Naive thymus-derived CD4-positive, alpha-beta T cell (primary cell): ENCODE measurements at regions of chr13 and their contacts with region 1.

Region 1: GRCh38 chr13:52128714-52129700 is at the start of gene NEK5:
- DNase-seq: peak; percentile 36 to 75 (median 55)
- ATAC-seq: peak; percentile 82
- H3K4me3 ChIP-seq: peak within 1 kb of the TSS; percentile 51
- H3K4me3 Mint-ChIP-seq: peak within 1 kb of the TSS; percentile 85 to 94 (median 88)
- H3K27ac ChIP-seq: no peak within 1 kb of the TSS
- H3K27ac Mint-ChIP-seq: peak within 1 kb of the TSS in 4 of 9 donors; percentile 3 to 19 (median 6)
- H3K4me1 ChIP-seq: peaks cover 11 to 13% of the 10 kb centered on the region in 2 donors
- H3K4me1 Mint-ChIP-seq: peaks cover 11 to 21% (median 18%) of the 10 kb centered on the region in 7 donors
- H3K27me3 ChIP-seq: no peaks in the 10 kb centered on the region
- H3K27me3 Mint-ChIP-seq: peaks cover 0 to 14% (median 6%) of the 10 kb centered on the region in 5 donors
- total RNA-seq, gene NEK5: not detected

Region 2: DNA sequence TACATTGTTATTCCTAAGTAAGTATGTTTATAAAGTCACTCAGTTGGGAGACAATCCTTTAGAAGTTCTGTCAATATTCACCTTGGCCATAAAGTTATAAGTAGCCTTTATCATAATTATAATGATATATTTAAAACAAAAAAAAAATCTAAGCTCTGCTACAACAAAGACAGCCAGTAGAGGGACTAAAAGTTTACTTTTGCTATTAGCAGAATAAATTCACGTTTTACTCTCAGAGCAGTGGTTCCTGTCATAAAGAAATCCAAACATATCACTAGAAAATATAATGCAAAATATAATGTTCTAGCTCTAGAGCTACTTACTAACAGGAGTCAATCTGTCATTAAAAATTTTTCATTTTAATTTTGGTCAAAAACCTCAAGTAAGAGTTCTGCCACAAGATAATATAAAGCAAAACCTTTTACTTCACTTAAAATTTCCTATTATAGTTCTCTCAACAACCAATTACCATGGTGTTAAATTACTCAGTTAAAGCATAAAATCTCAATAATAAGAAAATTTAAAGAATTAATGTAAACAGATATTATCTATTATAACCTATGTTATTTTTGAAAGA is 693.9 kb before region 1 on chr13:
- CTCF ChIA-PET with region 1: interaction called, 5 read pairs
- POLR2A ChIA-PET with region 1: no interaction called
- intact Hi-C with region 1: loop called (anchors 5 kb)
- DNase-seq: peak in 6 of 9 donors; percentile 19 to 50 (median 33)
- ATAC-seq: peak; percentile 47
- H3K4me3 ChIP-seq: no peak overlapping the region
- H3K4me3 Mint-ChIP-seq: no peak overlapping the region
- H3K27ac ChIP-seq: no peak overlapping the region
- H3K27ac Mint-ChIP-seq: peak overlapping the region in 1 of 9 donors; percentile 61
- H3K4me1 ChIP-seq: no peaks in the 10 kb centered on the region
- H3K4me1 Mint-ChIP-seq: peaks cover 8 to 47% (median 25%) of the 10 kb centered on the region in 7 donors
- H3K27me3 ChIP-seq: no peaks in the 10 kb centered on the region
- H3K27me3 Mint-ChIP-seq: no peaks in the 10 kb centered on the region

Region 3: GRCh38 chr13:51844862-51845573 is 284.0 kb before region 1 on chr13 and contains the start of gene TMEM272:
- CTCF ChIA-PET with region 1: interaction called, 3 read pairs
- POLR2A ChIA-PET with region 1: no interaction called
- intact Hi-C with region 1: loop called (anchors 1 kb)
- DNase-seq: peak in 8 of 9 donors; percentile 26 to 69 (median 42)
- ATAC-seq: peak; percentile 88
- H3K4me3 ChIP-seq: no peak within 1 kb of the TSS
- H3K4me3 Mint-ChIP-seq: peak within 1 kb of the TSS in 8 of 10 donors; percentile 19 to 75 (median 58)
- H3K27ac ChIP-seq: no peak within 1 kb of the TSS
- H3K27ac Mint-ChIP-seq: no peak within 1 kb of the TSS
- H3K4me1 ChIP-seq: peaks cover 0 to 6% of the 10 kb centered on the region in 2 donors
- H3K4me1 Mint-ChIP-seq: peaks cover 0 to 12% (median 7%) of the 10 kb centered on the region in 7 donors
- H3K27me3 ChIP-seq: no peaks in the 10 kb centered on the region
- H3K27me3 Mint-ChIP-seq: peaks cover 0 to 24% (median 11%) of the 10 kb centered on the region in 5 donors
- total RNA-seq, gene TMEM272: 0.19 to 23.3 (median 5.9) TPM

Region 4: DNA sequence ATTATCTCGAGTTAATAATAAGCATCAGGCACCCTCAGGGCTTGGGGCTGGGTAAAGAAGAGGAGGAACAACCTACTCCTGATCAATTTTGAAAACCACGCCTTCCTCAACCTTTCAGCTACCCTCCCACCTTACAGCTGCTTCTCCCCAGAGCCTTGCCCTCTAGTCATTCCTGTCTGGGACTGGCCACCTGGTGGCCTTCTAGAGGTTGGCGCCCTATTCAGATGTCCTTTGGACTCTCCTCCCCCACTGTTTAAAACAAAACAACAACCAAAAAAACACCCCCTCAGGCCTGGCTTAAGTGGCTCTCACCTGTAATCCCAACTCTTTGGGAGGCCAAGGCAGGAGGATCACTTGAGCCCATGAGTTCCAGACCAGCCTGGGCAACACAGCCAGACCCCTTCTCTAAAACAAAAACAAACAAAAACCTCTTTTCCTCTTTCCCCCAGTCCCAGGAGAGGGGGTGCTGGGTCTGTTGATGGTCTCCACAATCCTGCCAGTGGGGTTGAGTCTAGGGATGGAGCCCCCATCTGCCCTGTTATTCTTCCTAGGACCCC is 204.9 kb before region 1 on chr13:
- CTCF ChIA-PET with region 1: no interaction called
- POLR2A ChIA-PET with region 1: no interaction called
- intact Hi-C with region 1: loop called in 1 of 2 experiments (anchors 1 kb)
- DNase-seq: no peak
- ATAC-seq: no peak
- H3K4me3 ChIP-seq: no peak overlapping the region
- H3K4me3 Mint-ChIP-seq: no peak overlapping the region
- H3K27ac ChIP-seq: no peak overlapping the region
- H3K27ac Mint-ChIP-seq: peak overlapping the region in 2 of 9 donors; percentile 30 to 51
- H3K4me1 ChIP-seq: no peaks in the 10 kb centered on the region
- H3K4me1 Mint-ChIP-seq: peaks cover 0 to 32% (median 11%) of the 10 kb centered on the region in 7 donors
- H3K27me3 ChIP-seq: no peaks in the 10 kb centered on the region
- H3K27me3 Mint-ChIP-seq: no peaks in the 10 kb centered on the region

Region 5: GRCh38 chr13:52001120-52001731 is 127.8 kb before region 1 on chr13:
- CTCF ChIA-PET with region 1: interaction called, 7 read pairs
- POLR2A ChIA-PET with region 1: interaction called, 3 read pairs
- intact Hi-C with region 1: loop called (anchors 1 kb)
- DNase-seq: peak in 6 of 9 donors; percentile 16 to 49 (median 38)
- ATAC-seq: peak; percentile 83
- H3K4me3 ChIP-seq: no peak overlapping the region
- H3K4me3 Mint-ChIP-seq: no peak overlapping the region
- H3K27ac ChIP-seq: no peak overlapping the region
- H3K27ac Mint-ChIP-seq: no peak overlapping the region
- H3K4me1 ChIP-seq: no peaks in the 10 kb centered on the region
- H3K4me1 Mint-ChIP-seq: peaks cover 0 to 7% (median 4%) of the 10 kb centered on the region in 7 donors
- H3K27me3 ChIP-seq: no peaks in the 10 kb centered on the region
- H3K27me3 Mint-ChIP-seq: peaks cover 0 to 35% (median 4%) of the 10 kb centered on the region in 5 donors

Region 6: DNA sequence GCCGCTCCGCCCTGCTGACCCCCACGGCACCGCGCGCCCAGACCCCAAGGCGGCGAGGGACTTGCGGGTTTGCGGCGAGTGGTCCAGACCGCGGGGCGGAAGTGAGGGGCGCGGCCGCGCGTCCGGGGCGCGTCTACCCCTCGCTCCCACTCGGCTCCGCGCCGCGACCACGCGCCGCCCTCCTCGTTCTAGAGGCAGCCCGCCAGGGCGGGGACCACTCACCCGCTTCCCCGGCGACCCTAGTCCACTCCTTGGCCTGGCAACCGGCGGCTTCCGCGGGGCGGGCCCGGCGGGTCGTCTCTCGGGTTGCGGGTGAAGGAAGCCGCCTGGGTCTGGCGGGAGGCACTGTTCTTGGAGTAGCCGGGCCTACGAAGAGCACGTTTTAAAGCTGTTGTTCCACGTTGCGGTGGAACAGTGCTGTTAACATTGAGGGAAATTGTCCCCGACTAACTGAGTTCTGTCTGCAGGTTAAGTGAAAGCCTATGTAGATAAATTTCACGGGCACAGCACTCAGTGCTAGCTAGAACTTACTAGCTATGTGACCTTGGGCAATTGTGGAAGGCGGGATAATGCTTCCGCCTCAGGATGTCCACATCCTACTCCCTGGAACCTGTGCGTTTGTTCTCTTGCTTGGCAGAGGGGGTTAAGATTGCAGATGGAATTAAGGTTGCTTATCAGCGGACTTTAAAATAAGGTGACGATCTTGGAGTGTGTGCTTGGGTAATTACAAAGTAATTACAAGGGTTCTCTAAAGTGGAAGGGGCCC is 30.5 kb after region 1 on chr13 and contains the start of gene NEK3:
- CTCF ChIA-PET with region 1: no interaction called
- POLR2A ChIA-PET with region 1: no interaction called
- intact Hi-C with region 1: loop called in 1 of 2 experiments (anchors 2 kb)
- DNase-seq: peak; percentile 32 to 69 (median 51)
- ATAC-seq: peak; percentile 83
- H3K4me3 ChIP-seq: peak within 1 kb of the TSS; percentile 69
- H3K4me3 Mint-ChIP-seq: peak within 1 kb of the TSS; percentile 86 to 92 (median 90)
- H3K27ac ChIP-seq: peak within 1 kb of the TSS; percentile 61
- H3K27ac Mint-ChIP-seq: peak within 1 kb of the TSS; percentile 62 to 94 (median 86)
- H3K4me1 ChIP-seq: peaks cover 6 to 15% of the 10 kb centered on the region in 2 donors
- H3K4me1 Mint-ChIP-seq: peaks cover 16 to 55% (median 51%) of the 10 kb centered on the region in 7 donors
- H3K27me3 ChIP-seq: no peaks in the 10 kb centered on the region
- H3K27me3 Mint-ChIP-seq: peaks cover 0 to 5% (median 0%) of the 10 kb centered on the region in 5 donors
- total RNA-seq, gene NEK3: 4.4 to 7.8 (median 4.5) TPM

Region 7: GRCh38 chr13:52804202-52804641 is 675.2 kb after region 1 on chr13:
- CTCF ChIA-PET with region 1: no interaction called
- POLR2A ChIA-PET with region 1: no interaction called
- intact Hi-C with region 1: no loop called
- DNase-seq: no peak
- ATAC-seq: no peak
- H3K4me3 ChIP-seq: no peak overlapping the region
- H3K4me3 Mint-ChIP-seq: no peak overlapping the region
- H3K27ac ChIP-seq: no peak overlapping the region
- H3K27ac Mint-ChIP-seq: no peak overlapping the region
- H3K4me1 ChIP-seq: no peaks in the 10 kb centered on the region
- H3K4me1 Mint-ChIP-seq: peaks cover 0 to under 1% (median 0%) of the 10 kb centered on the region in 7 donors
- H3K27me3 ChIP-seq: no peaks in the 10 kb centered on the region
- H3K27me3 Mint-ChIP-seq: peaks cover 6 to 39% (median 29%) of the 10 kb centered on the region in 5 donors